ENCODE measurements at regions of chr1 and their contacts with region 1.

Region 1: DNA sequence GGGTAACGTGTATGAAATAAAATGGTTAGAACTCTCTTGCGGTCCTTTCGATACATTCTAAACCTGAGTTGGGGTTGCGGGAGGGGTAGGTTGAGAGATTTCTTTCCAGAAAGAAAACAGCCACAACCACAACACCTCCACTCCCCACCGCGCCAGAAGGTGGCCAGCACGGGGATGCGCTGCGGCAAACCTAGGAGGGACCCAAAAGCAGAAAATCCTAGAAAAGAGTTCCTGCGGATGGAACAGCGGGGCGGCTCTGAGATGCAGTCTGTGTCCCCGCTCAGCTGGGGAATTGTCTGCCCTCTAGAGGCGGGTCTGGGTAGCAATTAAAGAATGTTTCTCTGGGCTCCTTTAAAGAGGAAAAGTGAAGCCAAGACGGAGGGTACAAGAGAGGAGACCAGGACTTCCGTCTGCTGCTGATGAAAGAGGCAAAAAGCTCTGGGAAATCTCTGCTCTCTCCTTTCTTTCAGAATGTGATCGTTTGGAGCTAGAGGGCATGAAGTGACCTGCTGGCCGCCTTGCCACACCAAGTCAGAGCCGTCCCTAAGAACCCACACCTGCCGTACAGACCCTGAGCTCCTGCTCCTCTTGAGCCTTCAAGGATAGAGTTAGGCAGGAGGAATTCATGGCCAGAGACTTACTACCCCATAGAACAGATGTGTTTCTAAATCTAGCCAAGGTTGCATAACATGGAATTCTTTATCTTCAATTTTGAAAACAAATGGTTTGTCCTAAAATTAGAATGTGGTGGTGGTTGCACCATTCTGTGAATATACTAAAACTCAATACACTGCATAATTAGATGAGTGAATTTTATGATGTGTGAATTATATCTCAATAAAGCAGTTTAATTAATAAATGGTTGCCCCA is 46.5 kb upstream of the COA6 start:
- DNase-seq: no peak
- H3K4me3 ChIP-seq: peak overlapping the region; percentile 59
- H3K27ac ChIP-seq: no peak overlapping the region
- H3K27me3 ChIP-seq: peaks cover 13% of the 10 kb centered on the region
- CTCF ChIP-seq: peak; percentile 81

Region 2: DNA sequence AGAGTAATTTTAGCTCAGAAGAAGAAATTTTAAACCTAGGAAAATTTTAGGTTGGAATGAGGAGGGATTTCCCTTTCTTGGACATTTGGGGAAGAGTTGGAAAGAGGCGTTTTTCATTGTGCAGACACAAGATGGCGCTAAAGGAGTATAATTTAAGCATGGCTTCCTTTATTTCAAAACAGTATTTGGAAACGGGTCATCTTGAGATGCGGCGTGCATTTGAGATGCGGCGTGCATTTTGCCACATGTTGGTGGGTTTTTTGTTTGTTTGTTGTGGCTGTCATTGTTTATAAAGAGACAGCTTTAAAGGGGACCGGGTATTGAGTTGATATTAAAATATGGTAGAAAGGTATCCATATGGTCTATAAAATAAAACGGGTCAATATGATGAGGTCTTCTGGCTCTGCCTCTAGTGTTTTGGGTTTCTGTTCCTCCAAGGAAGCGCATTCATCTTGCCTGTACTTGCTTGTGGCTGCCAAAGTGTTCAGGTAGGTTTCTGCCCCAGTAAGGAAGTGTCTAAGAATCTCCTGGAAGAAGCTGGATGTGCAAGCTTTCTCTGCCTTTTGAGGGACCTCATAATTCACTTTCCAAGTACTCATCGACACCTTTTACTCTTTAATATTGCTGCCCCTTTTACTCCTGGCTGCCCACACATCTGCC is 212.0 kb before region 1 on chr1:
- CTCF ChIA-PET with region 1: interaction called, 17 read pairs
- POLR2A ChIA-PET with region 1: no interaction called
- DNase-seq: peak; percentile 24
- H3K4me3 ChIP-seq: 0 out of 2 replicates have a peak overlapping the region, but pooled peaks have one; percentile 10
- H3K27ac ChIP-seq: no peak overlapping the region
- H3K27me3 ChIP-seq: peaks cover 4% of the 10 kb centered on the region
- CTCF ChIP-seq: peak; percentile 72

Region 3: DNA sequence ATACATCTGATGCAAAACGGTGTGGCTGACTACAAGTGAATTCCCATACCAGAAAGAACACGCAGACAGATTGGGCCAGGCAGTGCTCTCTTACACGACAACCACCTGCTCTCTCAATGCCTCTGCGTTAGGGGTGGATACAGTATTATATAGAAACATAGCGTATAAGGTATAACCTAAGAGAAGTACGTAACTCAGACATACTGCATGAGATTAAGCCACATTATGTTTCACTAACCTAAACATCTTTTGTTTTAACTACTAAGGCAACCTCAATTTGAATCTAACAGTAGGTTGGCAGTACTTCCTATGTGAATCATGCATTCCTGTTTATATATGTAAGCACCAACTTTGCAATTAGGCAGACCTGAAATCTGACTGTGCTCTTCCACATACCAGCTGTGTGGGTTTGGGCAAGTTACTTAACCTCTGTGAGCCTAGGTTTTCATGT is 11.6 kb before region 1 on chr1:
- CTCF ChIA-PET with region 1: interaction called, 47 read pairs
- POLR2A ChIA-PET with region 1: no interaction called
- DNase-seq: no peak
- H3K4me3 ChIP-seq: no peak overlapping the region
- H3K27ac ChIP-seq: no peak overlapping the region
- H3K27me3 ChIP-seq: peaks cover 8% of the 10 kb centered on the region
- CTCF ChIP-seq: no peak

Region 4: DNA sequence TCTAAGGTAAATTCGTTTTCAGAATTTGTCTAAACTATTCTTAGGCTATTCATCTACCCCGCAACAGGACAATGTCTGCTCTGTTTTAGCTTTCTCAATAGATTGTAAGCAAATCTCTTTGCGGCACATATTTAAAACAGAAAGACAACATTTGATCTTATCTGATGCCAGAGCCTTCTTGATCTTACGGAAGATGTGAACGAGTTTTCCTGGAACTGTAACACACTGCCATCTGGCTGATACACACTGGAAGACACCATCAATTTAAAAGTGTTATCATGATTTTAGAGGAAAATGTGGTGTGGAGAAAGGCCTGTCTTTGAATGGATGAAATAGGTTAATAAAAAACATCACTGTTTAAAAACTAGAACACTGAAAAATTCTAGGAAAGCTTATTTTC is 82.6 kb after region 1 on chr1:
- CTCF ChIA-PET with region 1: no interaction called
- POLR2A ChIA-PET with region 1: no interaction called
- DNase-seq: no peak
- H3K4me3 ChIP-seq: no peak overlapping the region
- H3K27ac ChIP-seq: no peak overlapping the region
- H3K27me3 ChIP-seq: no peaks in the 10 kb centered on the region
- CTCF ChIP-seq: 0 out of 2 replicates have a peak, but pooled peaks have one; percentile 12